SK-N-SH (cell line): ENCODE measurements at regions of chr19 and their contacts with region 1.

Region 1: GRCh38 chr19:35357867-35358573 is at the start of gene FFAR3:
- DNase-seq: no peak
- H3K4me3 ChIP-seq: no peak within 1 kb of the TSS; a peak in 1 of 4 replicates
- H3K27ac ChIP-seq: no peak within 1 kb of the TSS
- H3K4me1 ChIP-seq: peaks cover 0 to 10% of the 10 kb centered on the region in 2 experiments; a peak in 1 of 4 replicates
- H3K27me3 ChIP-seq: peaks cover 70% of the 10 kb centered on the region
- CTCF ChIP-seq: no peak
- EP300 ChIP-seq: no peak
- RAD21 ChIP-seq: no peak
- polyA plus RNA-seq, gene FFAR3: not detected in 2 replicates

Region 2: DNA sequence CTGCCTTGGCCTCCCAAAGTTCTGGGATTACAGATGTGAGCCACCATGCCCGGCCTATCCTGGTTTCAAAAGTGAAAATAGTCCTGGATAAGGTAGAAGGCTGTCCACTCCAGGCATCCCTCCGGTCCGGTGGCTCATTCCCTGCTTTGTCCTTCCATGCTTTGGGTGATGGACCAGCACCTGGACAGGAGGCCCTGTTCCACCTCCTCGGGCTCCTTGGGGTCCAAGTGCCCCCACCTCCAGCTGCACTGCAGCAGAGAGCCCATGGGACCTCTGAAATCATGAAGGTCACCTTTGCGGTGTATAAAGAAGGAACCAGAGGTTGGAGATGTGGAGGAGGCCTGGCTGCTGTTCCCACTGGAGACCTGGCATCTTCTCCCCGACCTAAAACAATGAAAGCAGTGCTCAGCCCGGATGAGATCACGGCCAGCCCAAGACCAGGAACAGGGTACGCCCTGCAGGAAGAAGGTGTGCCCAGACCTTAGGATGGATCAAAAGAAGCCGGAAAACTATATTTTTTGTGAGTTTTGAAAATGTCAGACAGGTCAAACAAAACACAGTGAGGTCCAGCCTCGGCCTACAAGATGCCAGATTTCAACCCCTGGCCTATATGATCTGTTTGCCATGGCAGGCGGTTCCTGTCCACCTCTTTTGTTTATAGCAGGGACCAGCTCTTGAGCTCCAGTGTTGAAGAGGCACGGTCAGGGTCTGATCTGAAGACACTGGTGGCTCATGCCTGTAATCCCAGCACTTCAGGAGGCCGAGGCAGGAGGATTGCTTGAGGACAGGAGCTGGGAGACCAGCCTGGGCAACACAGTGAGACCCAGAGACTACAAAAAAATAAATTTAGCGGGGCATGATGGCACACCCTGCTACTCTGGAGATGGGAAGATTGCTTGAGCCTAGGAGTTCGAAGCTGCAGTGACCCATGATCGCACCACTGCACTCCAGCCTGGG is 103.4 kb before region 1 on chr19:
- CTCF ChIA-PET with region 1: no interaction called
- POLR2A ChIA-PET with region 1: no interaction called
- DNase-seq: no peak
- H3K4me3 ChIP-seq: no peak overlapping the region
- H3K27ac ChIP-seq: no peak overlapping the region
- H3K4me1 ChIP-seq: no peaks in the 10 kb centered on the region; a peak in 1 of 4 replicates
- H3K27me3 ChIP-seq: peaks cover 44% of the 10 kb centered on the region
- CTCF ChIP-seq: no peak
- EP300 ChIP-seq: no peak
- RAD21 ChIP-seq: no peak

Region 3: GRCh38 chr19:35427187-35427586 is 69.2 kb after region 1 on chr19:
- CTCF ChIA-PET with region 1: no interaction called
- POLR2A ChIA-PET with region 1: no interaction called
- DNase-seq: no peak
- H3K4me3 ChIP-seq: no peak overlapping the region
- H3K27ac ChIP-seq: no peak overlapping the region
- H3K4me1 ChIP-seq: no peaks in the 10 kb centered on the region
- H3K27me3 ChIP-seq: peaks cover 55% of the 10 kb centered on the region; the same call in 1 of the 2 replicates
- CTCF ChIP-seq: no peak
- EP300 ChIP-seq: no peak
- RAD21 ChIP-seq: no peak

Region 4: DNA sequence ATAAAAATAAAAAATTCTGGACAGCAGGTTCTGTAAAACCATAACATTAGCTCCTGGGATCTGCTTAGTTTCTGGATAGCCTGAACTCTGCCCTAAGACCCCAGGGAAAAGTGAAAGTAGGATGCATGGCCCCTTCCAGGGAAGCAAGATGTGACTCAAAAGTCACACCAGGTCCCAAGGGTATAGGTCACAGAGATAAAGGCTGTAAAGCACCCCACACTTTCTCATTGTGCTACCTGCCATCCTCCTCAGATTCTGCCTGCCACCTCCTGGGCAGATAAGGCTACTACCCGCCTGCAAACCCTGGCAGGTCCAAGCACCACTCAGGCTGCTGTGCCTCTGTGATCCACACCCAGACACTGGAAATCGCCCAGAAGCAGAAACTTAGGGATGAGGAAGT is 110.6 kb after region 1 on chr19:
- CTCF ChIA-PET with region 1: interaction called, 47 read pairs
- POLR2A ChIA-PET with region 1: no interaction called
- DNase-seq: peak; percentile 45
- H3K4me3 ChIP-seq: no peak overlapping the region
- H3K27ac ChIP-seq: no peak overlapping the region
- H3K4me1 ChIP-seq: no peaks in the 10 kb centered on the region
- H3K27me3 ChIP-seq: peaks cover 70% of the 10 kb centered on the region
- CTCF ChIP-seq: peak; percentile 55
- EP300 ChIP-seq: no peak
- RAD21 ChIP-seq: peak; percentile 56